ENCODE measurements at regions of chr5 and their contacts with region 1.

Region 1: GRCh38 chr5:40277161-40277906 is 402.4 kb upstream of the PTGER4 start:
- DNase-seq: peak; percentile 64
- ATAC-seq: peak; percentile 91
- H3K4me3 Mint-ChIP-seq: peak overlapping the region; percentile 28
- H3K27ac Mint-ChIP-seq: peak overlapping the region; percentile 97
- H3K4me1 Mint-ChIP-seq: peaks cover 45% of the 10 kb centered on the region
- H3K27me3 Mint-ChIP-seq: no peaks in the 10 kb centered on the region
- CTCF ChIP-seq: no peak

Region 2: DNA sequence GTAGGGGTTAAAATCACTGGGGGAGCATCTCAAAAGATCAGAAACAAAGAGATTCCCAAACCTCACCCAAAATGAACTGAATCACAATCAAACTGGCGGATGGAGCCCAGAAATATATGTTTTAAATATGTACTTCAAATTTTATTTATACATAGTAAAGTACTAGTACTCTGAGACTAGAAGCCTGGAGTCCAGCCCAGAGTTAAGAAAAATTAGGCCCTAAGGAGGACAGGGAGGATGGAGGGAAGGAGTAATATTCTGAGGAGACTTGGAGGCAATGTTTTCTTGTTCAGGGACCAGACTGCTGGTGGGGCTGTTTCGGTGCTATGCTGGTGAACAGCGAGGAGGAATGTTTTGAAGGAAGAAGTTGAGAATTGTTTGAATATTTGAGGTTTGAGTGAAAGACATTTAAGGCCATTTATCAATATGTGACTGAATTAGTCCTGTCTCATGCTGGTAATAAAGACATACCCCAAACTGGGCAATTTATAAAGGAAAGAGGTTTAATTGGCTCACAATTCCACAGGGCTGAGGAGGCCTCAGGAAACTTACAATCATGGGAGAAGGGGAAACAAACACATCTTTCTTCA is 300.2 kb before region 1 on chr5:
- CTCF ChIA-PET with region 1: no interaction called
- POLR2A ChIA-PET with region 1: no interaction called
- intact Hi-C with region 1: no loop called
- DNase-seq: no peak
- ATAC-seq: no peak
- H3K4me3 Mint-ChIP-seq: no peak overlapping the region
- H3K27ac Mint-ChIP-seq: no peak overlapping the region
- H3K4me1 Mint-ChIP-seq: no peaks in the 10 kb centered on the region
- H3K27me3 Mint-ChIP-seq: no peaks in the 10 kb centered on the region
- CTCF ChIP-seq: no peak

Region 3: DNA sequence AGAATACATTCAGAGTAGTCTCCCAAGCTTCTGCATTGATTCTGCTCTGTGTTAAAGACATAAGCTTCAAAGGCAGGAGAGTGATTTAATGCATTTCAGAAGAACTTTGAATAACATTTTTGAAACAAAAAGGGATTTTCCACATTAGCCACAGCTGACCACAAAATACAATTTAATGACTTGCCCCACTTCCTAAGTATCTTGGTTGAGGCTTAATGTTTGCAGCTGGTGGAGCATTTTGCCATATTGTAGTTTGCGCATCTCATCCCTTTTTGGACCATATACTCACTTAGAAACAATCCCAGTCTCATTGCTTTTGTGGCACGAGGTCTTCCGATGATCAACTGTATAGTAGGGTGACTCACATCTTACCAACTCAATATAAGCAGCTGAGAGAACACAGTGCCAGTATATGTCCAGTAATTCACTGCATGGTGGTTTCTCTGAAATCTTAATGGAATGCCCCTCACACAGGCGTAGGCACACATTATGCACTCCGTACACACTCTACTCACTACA is 53.4 kb before region 1 on chr5:
- CTCF ChIA-PET with region 1: interaction called, 4 read pairs
- POLR2A ChIA-PET with region 1: interaction called, 12 read pairs
- intact Hi-C with region 1: loop called (anchors 2 kb)
- DNase-seq: peak; percentile 65
- ATAC-seq: peak; percentile 90
- H3K4me3 Mint-ChIP-seq: peak overlapping the region; percentile 14
- H3K27ac Mint-ChIP-seq: peak overlapping the region; percentile 82
- H3K4me1 Mint-ChIP-seq: peaks cover 51% of the 10 kb centered on the region
- H3K27me3 Mint-ChIP-seq: peaks cover 1% of the 10 kb centered on the region
- CTCF ChIP-seq: no peak

Region 4: GRCh38 chr5:40321514-40321913 is 44.2 kb after region 1 on chr5:
- CTCF ChIA-PET with region 1: no interaction called
- POLR2A ChIA-PET with region 1: no interaction called
- intact Hi-C with region 1: no loop called
- DNase-seq: no peak
- ATAC-seq: no peak
- H3K4me3 Mint-ChIP-seq: no peak overlapping the region
- H3K27ac Mint-ChIP-seq: no peak overlapping the region
- H3K4me1 Mint-ChIP-seq: peaks cover 7% of the 10 kb centered on the region
- H3K27me3 Mint-ChIP-seq: no peaks in the 10 kb centered on the region
- CTCF ChIP-seq: no peak

Region 5: DNA sequence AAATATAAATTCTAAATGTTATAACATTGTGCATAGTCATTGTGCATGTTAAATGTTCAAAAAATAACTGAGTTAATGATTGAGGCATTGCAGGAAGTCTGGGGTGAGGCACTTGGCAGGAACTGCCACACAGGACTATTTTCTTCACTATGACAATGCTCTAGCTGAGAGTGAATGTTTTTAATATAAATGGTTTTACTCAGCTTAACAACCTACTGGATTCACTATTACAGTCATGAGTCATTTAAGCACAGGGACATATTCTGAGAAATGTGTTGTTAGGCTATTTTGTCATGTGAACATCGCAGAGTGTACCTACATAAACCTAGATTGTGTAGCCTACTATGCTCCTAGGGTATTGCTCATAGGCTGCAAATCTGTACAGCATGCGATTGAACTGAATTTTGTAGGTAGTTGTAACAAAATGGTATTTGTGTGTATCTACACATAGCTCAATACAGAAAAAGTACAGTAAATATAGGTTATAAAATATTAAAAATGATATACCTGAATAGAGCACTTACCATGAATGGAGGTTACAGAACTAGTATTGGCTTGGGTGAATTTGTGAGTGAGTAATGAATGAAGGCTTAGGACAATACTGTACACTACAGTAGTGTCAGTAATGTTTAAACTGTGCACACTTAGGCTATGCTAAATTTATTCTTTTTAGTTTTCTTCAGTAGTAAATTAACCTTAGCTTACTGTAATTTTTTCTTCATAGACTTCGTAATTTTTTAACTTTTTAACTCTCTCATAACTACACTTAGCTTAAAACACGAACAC is 56.3 kb after region 1 on chr5:
- CTCF ChIA-PET with region 1: interaction called, 3 read pairs
- POLR2A ChIA-PET with region 1: interaction called, 4 read pairs
- intact Hi-C with region 1: loop called (anchors 1 kb)
- DNase-seq: peak; percentile 27
- ATAC-seq: peak; percentile 98
- H3K4me3 Mint-ChIP-seq: no peak overlapping the region
- H3K27ac Mint-ChIP-seq: no peak overlapping the region
- H3K4me1 Mint-ChIP-seq: peaks cover 27% of the 10 kb centered on the region
- H3K27me3 Mint-ChIP-seq: no peaks in the 10 kb centered on the region
- CTCF ChIP-seq: no peak

Region 6: DNA sequence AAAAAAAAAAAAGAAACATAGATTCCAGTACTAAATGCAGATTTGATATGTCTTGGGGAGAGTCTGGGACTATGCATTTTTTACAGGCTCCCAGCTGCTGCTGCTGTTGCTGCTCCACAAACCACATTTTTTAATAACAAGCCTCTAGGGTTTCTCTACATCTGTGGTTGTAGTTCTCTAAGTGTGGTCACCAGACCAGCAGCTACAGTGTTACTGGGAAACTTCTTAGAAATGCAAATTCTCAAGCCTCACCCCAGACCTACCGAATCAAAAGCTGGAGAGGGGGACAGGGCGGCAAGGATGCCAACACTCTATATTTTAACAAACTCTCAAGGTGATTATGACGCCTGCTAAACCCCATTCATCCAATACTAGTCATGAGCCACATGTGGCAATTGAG is 109.0 kb after region 1 on chr5:
- CTCF ChIA-PET with region 1: interaction called, 3 read pairs
- POLR2A ChIA-PET with region 1: interaction called, 3 read pairs
- intact Hi-C with region 1: loop called (anchors 1 kb)
- DNase-seq: peak; percentile 60
- ATAC-seq: peak; percentile 31
- H3K4me3 Mint-ChIP-seq: no peak overlapping the region
- H3K27ac Mint-ChIP-seq: no peak overlapping the region
- H3K4me1 Mint-ChIP-seq: peaks cover 81% of the 10 kb centered on the region
- H3K27me3 Mint-ChIP-seq: no peaks in the 10 kb centered on the region
- CTCF ChIP-seq: no peak

Region 7: DNA sequence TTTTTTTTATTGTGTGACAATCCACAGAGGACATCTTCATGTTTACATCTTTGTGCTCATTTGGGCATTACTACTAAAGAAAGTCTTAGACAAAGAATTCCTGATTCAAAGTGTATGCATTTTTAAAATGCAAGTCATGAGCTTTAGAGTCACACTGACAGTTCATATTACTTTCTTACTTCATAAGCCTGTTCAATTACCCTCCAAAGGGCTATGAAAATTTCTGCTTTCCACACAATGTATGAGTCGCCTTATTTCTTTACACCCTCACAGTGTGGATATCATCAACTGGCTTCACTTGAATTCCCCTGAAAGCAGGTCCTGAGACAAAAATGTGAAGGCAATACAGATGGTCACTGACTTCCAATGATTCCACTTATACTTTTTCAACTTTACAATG is 122.0 kb after region 1 on chr5:
- CTCF ChIA-PET with region 1: no interaction called
- POLR2A ChIA-PET with region 1: no interaction called
- intact Hi-C with region 1: no loop called
- DNase-seq: no peak
- ATAC-seq: no peak
- H3K4me3 Mint-ChIP-seq: no peak overlapping the region
- H3K27ac Mint-ChIP-seq: no peak overlapping the region
- H3K4me1 Mint-ChIP-seq: peaks cover 56% of the 10 kb centered on the region
- H3K27me3 Mint-ChIP-seq: no peaks in the 10 kb centered on the region
- CTCF ChIP-seq: no peak

Region 8: GRCh38 chr5:40437452-40437861 is 160.1 kb after region 1 on chr5:
- CTCF ChIA-PET with region 1: no interaction called
- POLR2A ChIA-PET with region 1: interaction called, 3 read pairs
- intact Hi-C with region 1: loop called (anchors 2 kb)
- DNase-seq: peak; percentile 63
- ATAC-seq: peak; percentile 72
- H3K4me3 Mint-ChIP-seq: peak overlapping the region; percentile 19
- H3K27ac Mint-ChIP-seq: peak overlapping the region; percentile 86
- H3K4me1 Mint-ChIP-seq: peaks cover 81% of the 10 kb centered on the region
- H3K27me3 Mint-ChIP-seq: no peaks in the 10 kb centered on the region
- CTCF ChIP-seq: no peak

Region 9: DNA sequence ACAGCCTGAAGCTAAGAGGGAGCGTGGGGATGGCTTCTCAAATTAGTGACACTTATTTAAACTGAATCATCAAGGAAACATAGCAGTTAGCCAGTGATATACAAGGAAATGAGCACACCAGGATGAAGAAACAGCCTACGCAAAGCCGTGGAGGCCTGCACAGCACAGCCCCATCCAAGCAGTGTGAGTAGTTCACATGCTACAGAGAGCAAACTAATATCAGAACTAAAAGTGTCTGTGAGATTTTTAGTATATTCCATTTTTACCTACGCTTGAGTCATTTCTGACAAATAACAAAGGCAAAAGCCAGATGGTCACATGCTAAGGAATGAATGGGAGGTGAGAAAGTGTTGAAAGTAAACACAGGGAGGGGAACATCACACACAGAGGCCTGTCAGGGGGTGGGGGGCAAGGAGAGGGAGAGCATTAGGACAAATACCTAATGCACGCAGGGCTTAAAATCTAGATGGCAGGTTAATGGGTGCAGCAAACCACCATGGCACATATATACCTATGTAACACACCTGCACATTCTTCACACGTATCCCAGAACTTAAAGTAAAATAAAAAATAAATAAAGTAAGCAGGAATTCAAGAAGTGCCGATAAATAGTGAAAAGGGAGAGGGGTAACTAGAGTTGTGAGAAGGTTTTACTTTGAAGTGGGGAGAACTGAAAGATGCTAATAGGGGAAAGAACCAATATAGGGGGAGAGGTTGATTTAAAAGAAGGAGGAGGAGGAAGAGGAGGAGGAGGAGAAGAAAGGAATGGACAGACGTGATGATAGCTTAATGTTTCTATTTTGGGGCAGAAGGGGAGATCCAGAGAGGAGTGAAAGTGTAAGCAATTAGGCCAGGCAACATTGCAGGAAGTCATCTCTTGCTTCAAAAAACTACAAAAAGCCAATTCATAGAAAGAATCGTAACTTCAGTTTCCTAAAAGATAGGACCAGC is 301.4 kb after region 1 on chr5:
- CTCF ChIA-PET with region 1: no interaction called
- POLR2A ChIA-PET with region 1: no interaction called
- intact Hi-C with region 1: loop called (anchors 2 kb)
- DNase-seq: peak; percentile 84
- ATAC-seq: peak; percentile 90
- H3K4me3 Mint-ChIP-seq: peak overlapping the region; percentile 64
- H3K27ac Mint-ChIP-seq: peak overlapping the region; percentile 84
- H3K4me1 Mint-ChIP-seq: peaks cover 38% of the 10 kb centered on the region
- H3K27me3 Mint-ChIP-seq: no peaks in the 10 kb centered on the region
- CTCF ChIP-seq: no peak